ENCODE measurements at regions of chr11 and their contacts with region 1.

Region 1: GRCh38 chr11:62880803-62881578 is at the start of gene SLC3A2:
- DNase-seq: peak; percentile 82
- H3K4me3 Mint-ChIP-seq: peak within 1 kb of the TSS; percentile 100
- H3K27ac Mint-ChIP-seq: peak within 1 kb of the TSS; percentile 100
- H3K4me1 Mint-ChIP-seq: peaks cover 49% of the 10 kb centered on the region
- H3K27me3 Mint-ChIP-seq: no peaks in the 10 kb centered on the region
- total RNA-seq, gene SLC3A2: 419 to 472 TPM

Region 2: GRCh38 chr11:62705880-62706849 is 174.8 kb before region 1 on chr11:
- CTCF ChIA-PET with region 1: interaction called, 3 read pairs
- intact Hi-C with region 1: loop called (anchors 1 kb)
- DNase-seq: peak; percentile 95
- H3K4me3 Mint-ChIP-seq: peak overlapping the region; percentile 88
- H3K27ac Mint-ChIP-seq: peak overlapping the region; percentile 24
- H3K4me1 Mint-ChIP-seq: peaks cover 40% of the 10 kb centered on the region
- H3K27me3 Mint-ChIP-seq: no peaks in the 10 kb centered on the region

Region 3: DNA sequence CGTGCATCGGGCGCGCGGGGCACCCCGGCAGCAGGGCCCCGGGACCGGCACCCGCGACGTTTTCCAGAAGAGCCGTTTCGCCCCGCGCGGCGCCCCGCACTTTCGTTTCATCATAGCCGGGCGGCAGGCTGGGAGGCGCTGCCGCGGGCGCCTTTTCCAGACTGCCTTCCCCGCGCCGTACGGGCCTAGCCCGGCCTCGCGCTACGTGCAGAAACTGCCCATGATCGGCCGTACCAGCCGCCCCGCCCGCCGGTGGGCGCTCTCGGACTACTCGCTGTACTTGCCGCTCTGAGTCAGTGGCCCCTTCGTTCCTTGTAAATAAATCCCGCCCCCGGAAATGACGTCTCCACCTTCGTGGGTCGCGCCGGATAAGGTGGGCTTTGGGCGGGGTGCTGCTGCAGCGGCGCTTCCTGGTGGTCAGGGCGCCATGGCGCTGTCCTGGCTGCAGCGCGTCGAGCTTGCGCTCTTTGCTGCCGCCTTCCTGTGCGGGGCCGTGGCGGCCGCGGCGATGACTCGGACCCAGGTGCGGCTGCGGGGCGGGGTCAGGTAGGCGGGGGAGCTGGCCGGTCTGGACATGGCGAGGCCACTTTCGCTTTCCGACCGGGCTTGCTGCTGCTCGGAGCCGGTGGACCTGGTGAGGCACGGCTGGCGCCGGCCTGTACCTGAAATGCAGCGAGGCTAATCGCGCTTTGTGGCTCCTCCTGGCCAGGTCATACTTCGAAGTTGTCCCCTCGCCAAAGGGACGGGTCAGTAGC is 93.8 kb before region 1 on chr11 and contains the start of gene TMEM179B:
- CTCF ChIA-PET with region 1: interaction called, 5 read pairs
- intact Hi-C with region 1: loop called (anchors 1 kb)
- DNase-seq: peak; percentile 99
- H3K4me3 Mint-ChIP-seq: peak within 1 kb of the TSS; percentile 92
- H3K27ac Mint-ChIP-seq: peak within 1 kb of the TSS; percentile 93
- H3K4me1 Mint-ChIP-seq: peaks cover 47% of the 10 kb centered on the region
- H3K27me3 Mint-ChIP-seq: no peaks in the 10 kb centered on the region
- total RNA-seq, gene TMEM179B: 13.9 to 15.2 TPM

Region 4: DNA sequence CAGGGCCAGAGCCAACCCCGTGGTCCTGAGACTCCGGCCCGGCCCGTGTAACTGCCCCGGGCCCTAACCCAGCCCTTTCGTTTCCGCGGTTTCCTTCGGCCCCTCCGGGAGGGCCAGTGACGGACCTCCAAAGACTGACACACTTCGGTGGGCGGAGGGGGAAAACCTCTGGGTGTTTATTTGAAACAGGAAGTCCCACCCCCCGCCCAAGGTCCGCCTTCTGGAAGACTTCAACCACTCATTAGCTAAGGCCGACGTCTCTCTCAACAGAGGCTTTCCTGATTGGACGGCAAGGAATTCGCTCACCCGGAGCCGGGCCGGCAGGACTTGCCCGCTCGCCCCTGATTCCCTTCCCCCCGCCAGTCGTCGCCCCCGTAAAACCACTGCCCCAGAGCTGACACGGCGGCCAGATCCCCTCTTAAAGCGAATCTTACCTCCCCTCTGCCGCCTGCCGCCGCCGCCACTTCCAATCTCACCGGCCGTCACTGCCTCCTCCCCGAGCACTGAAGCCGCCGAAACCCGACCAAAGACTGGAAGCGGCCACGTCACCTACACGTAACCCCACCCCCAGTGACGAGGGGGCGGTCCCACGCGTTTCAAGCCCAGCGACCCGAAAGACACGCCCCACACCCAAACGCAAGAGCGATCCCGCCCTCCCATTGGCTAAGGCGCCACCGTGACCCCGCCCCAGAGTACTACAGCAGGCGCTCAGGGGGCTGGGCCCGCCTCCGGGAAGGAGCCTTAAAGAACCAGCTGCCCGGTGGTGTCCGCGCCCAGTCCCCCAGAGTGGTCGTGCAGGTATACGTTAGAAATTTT is 49.3 kb before region 1 on chr11 and contains the start of gene STX5:
- CTCF ChIA-PET with region 1: no interaction called
- intact Hi-C with region 1: loop called (anchors 1 kb)
- DNase-seq: peak; percentile 100
- H3K4me3 Mint-ChIP-seq: peak within 1 kb of the TSS; percentile 99
- H3K27ac Mint-ChIP-seq: peak within 1 kb of the TSS; percentile 100
- H3K4me1 Mint-ChIP-seq: peaks cover 47% of the 10 kb centered on the region
- H3K27me3 Mint-ChIP-seq: no peaks in the 10 kb centered on the region
- total RNA-seq, gene STX5: 22.7 to 23.0 TPM

Region 5: GRCh38 chr11:62860835-62861563 is 20.0 kb before region 1 on chr11:
- CTCF ChIA-PET with region 1: interaction called, 10 read pairs
- intact Hi-C with region 1: loop called (anchors 1 kb)
- DNase-seq: no peak
- H3K4me3 Mint-ChIP-seq: no peak overlapping the region
- H3K27ac Mint-ChIP-seq: no peak overlapping the region
- H3K4me1 Mint-ChIP-seq: peaks cover 46% of the 10 kb centered on the region
- H3K27me3 Mint-ChIP-seq: no peaks in the 10 kb centered on the region

Measured in activated naive CD4-positive, alpha-beta T cell treated with anti-CD3 and anti-CD28 coated beads for 36 hours (primary cell).